Lower leg skin (tissue), 4 donors: ENCODE measurements at regions of chr4 and their contacts with region 1.

Region 1: GRCh38 chr4:67880866-67881610 is 2.8 kb downstream of the TMPRSS11D start:
- DNase-seq: no peak
- H3K4me3 ChIP-seq: no peak overlapping the region
- CTCF ChIP-seq: no peak
- POLR2A ChIP-seq: no peak

Region 2: DNA sequence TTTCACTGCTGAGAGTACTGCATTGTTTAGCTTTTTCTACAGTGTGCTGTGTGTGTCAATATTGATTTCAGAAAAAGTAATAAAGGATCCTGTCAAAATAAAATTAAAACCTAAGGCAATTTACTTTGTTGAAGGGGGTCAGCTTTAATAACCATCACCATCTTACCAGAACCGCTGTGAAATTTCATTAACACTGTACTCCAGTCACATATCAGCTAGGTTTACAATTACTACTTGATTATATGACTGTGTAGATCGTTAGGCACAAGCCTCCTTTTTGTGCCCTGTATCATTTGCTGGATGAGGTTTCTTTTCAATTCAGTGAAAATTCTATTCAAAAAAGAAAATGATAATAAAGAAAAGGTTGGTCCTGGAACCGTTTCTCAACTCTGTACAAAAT is 1252.9 kb before region 1 on chr4:
- intact Hi-C with region 1: loop called (anchors 5 kb)
- DNase-seq: no peak
- H3K4me3 ChIP-seq: no peak overlapping the region
- CTCF ChIP-seq: no peak
- POLR2A ChIP-seq: no peak

Region 3: DNA sequence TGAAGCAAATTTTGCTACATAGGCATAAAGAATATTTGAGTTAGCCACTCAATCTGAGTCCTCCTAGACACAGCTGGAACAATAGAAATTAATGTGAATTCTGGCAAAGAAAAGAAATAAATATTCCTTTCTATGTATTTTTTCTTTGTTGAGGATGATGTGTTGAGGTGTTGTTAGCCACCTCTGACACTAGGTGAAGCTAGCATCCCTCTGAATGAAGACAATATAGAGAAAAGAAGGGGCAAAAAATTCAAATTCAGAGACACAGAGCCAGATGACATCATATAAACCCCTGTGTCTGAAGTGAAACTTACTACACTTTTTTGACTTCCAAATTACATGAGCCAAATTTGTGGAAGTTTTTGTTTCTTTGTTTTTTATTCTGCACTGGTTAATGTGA is 37.4 kb after region 1 on chr4:
- intact Hi-C with region 1: no loop called
- DNase-seq: no peak
- H3K4me3 ChIP-seq: no peak overlapping the region
- CTCF ChIP-seq: no peak
- POLR2A ChIP-seq: no peak

Region 4: DNA sequence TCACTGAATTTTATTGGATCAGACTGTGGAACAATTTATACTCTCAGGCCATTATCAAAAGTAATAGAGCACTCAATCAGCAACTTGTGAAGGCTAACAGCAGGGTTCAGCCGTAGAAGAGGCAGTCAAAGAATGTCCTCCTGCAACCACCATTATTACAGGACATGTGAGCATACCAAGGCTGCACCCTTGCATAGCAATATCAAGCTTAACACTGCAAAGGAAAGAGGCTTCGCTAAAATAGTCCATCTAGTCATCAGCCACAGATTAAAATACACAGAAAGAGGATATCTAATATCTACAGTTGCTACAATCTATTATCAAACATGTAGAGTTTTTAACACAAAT is 407.3 kb after region 1 on chr4:
- intact Hi-C with region 1: no loop called
- DNase-seq: no peak
- H3K4me3 ChIP-seq: no peak overlapping the region
- CTCF ChIP-seq: no peak
- POLR2A ChIP-seq: no peak